ENCODE measurements at regions of chr17 and their contacts with region 1.

Region 1: GRCh38 chr17:45135192-45135977 is at the start of gene ACBD4:
- DNase-seq: peak; percentile 99 to 100
- ATAC-seq: peak; percentile 59 to 78
- H3K4me3 ChIP-seq: peak within 1 kb of the TSS; percentile 55
- H3K27ac ChIP-seq: peak within 1 kb of the TSS; percentile 82 to 93
- H3K4me1 ChIP-seq: peaks cover 33% of the 10 kb centered on the region
- CTCF ChIP-seq: peak; percentile 100
- EP300 ChIP-seq: no peak
- POLR2A ChIP-seq: peak; percentile 77
- RAD21 ChIP-seq: peak; percentile 99 to 100
- polyA plus RNA-seq, gene ACBD4: 11.2 and 11.4 TPM in 2 replicates

Region 2: GRCh38 chr17:44919885-44920564 is 215.4 kb before region 1 on chr17:
- CTCF ChIA-PET with region 1: interaction called, 47 read pairs
- POLR2A ChIA-PET with region 1: no interaction called
- DNase-seq: peak; percentile 89 to 97
- ATAC-seq: peak; percentile 85 to 90
- H3K4me3 ChIP-seq: no peak overlapping the region
- H3K27ac ChIP-seq: peak overlapping the region; percentile 14 to 80; a peak in 4 of 6 replicates
- H3K4me1 ChIP-seq: peaks cover 23% of the 10 kb centered on the region
- CTCF ChIP-seq: peak; percentile 98
- EP300 ChIP-seq: no peak
- POLR2A ChIP-seq: no peak
- RAD21 ChIP-seq: peak; percentile 99

Region 3: DNA sequence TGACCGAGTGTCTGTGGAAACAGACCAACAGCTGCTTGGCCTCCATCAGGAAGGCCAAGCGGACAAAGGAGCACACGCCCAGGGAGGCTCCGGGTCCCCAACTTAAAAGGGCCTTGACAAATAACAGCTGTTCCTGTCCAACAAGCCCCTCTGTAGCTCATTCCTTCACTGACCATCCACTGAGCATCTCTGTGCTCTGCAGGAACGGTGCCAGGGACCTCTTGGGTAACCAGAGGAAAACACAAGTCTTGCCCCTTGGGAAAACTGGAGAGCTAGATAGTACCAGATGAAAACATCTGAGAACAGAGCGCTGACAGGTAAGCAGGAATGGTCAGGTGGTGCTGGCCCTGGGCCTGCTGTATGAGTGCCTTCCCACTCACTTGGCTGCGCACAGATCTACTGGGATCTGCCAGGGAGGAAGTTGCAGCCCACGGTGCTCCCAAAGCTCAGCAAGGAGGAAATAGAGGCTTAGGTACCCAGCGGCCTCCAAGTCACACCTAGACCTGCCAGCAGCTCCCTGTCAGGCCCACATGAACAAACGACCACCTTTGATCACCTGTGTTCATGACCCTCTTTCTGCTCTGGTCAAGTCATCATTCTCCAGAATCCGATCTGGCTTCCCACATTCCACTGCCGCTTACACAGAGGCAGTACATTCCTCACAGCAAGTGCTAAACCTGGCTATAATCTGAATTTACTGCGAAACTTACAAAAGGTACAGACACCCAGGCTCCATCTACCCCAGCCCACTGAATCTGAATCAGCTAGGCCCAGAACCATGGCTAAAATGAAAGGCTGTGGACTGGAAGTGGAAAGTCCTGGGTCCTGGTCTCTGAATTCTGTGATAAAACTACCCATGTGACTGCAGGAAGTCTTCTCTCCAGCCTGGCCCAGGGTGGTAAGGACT is 96.4 kb before region 1 on chr17:
- CTCF ChIA-PET with region 1: interaction called, 11 read pairs
- POLR2A ChIA-PET with region 1: no interaction called
- DNase-seq: no peak
- ATAC-seq: no peak
- H3K4me3 ChIP-seq: no peak overlapping the region
- H3K27ac ChIP-seq: 0 out of 6 replicates have a peak overlapping the region, but pooled peaks of 1 of the 2 experiments have one; percentile 0
- H3K4me1 ChIP-seq: peaks cover 12% of the 10 kb centered on the region; the same call in 1 of the 3 replicates
- CTCF ChIP-seq: no peak
- EP300 ChIP-seq: no peak
- POLR2A ChIP-seq: no peak
- RAD21 ChIP-seq: no peak

Region 4: GRCh38 chr17:45098869-45099616 is 36.3 kb before region 1 on chr17:
- CTCF ChIA-PET with region 1: interaction called, 742 read pairs
- POLR2A ChIA-PET with region 1: no interaction called
- DNase-seq: peak; percentile 85 to 99
- ATAC-seq: peak; percentile 87 to 92
- H3K4me3 ChIP-seq: no peak overlapping the region
- H3K27ac ChIP-seq: no peak overlapping the region
- H3K4me1 ChIP-seq: peaks cover 11% of the 10 kb centered on the region
- CTCF ChIP-seq: peak; percentile 98
- EP300 ChIP-seq: no peak
- POLR2A ChIP-seq: no peak
- RAD21 ChIP-seq: peak; percentile 84 to 87

Region 5: GRCh38 chr17:45184144-45184543 is 48.8 kb after region 1 on chr17:
- CTCF ChIA-PET with region 1: interaction called, 37 read pairs
- POLR2A ChIA-PET with region 1: no interaction called
- DNase-seq: no peak
- ATAC-seq: no peak
- H3K4me3 ChIP-seq: no peak overlapping the region
- H3K27ac ChIP-seq: peak overlapping the region; percentile 60 to 79
- H3K4me1 ChIP-seq: peaks cover 23% of the 10 kb centered on the region
- CTCF ChIP-seq: no peak
- EP300 ChIP-seq: no peak
- POLR2A ChIP-seq: no peak
- RAD21 ChIP-seq: no peak

Region 6: DNA sequence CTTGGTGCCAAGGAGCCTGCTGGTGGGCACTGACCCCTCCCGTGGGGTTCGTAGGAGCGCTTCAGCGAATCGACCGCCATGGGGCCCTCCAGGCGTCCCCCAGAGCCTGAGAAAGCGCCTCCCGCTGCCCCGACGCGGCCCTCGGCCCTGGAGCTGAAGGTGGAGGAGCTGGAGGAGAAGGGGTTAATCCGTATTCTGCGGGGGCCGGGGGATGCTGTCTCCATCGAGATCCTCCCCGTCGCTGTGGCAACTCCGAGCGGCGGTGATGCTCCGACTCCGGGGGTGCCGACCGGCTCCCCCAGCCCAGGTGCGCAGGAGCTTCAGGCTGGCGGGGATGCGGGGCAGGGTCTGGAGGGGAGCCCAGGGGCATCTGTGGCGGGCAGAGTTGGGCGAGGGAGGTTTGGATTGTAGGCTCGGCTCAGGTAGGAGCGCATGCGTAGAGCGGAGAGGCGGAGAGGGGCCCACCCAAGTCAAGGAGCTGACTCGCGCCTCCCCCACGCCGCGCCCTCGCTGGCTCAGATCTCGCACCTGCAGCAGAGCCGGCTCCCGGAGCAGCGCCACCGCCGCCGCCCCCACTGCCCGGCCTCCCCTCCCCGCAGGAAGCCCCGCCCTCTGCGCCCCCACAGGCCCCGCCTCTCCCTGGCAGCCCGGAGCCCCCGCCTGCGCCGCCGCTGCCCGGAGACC is 106.1 kb after region 1 on chr17:
- CTCF ChIA-PET with region 1: interaction called, 202 read pairs
- POLR2A ChIA-PET with region 1: no interaction called
- DNase-seq: no peak
- ATAC-seq: no peak
- H3K4me3 ChIP-seq: no peak overlapping the region
- H3K27ac ChIP-seq: no peak overlapping the region; a peak in 1 of 6 replicates
- H3K4me1 ChIP-seq: peaks cover 13% of the 10 kb centered on the region
- CTCF ChIP-seq: no peak
- EP300 ChIP-seq: no peak
- POLR2A ChIP-seq: no peak
- RAD21 ChIP-seq: no peak

Region 7: GRCh38 chr17:45317112-45317928 is 181.9 kb after region 1 on chr17:
- CTCF ChIA-PET with region 1: interaction called, 12 read pairs
- POLR2A ChIA-PET with region 1: no interaction called
- DNase-seq: peak; percentile 100
- ATAC-seq: peak; percentile 79 to 83
- H3K4me3 ChIP-seq: peak overlapping the region; percentile 69
- H3K27ac ChIP-seq: peak overlapping the region; percentile 95
- H3K4me1 ChIP-seq: peaks cover 73% of the 10 kb centered on the region
- CTCF ChIP-seq: no peak
- EP300 ChIP-seq: no peak
- POLR2A ChIP-seq: peak; percentile 68
- RAD21 ChIP-seq: no peak

Region 8: DNA sequence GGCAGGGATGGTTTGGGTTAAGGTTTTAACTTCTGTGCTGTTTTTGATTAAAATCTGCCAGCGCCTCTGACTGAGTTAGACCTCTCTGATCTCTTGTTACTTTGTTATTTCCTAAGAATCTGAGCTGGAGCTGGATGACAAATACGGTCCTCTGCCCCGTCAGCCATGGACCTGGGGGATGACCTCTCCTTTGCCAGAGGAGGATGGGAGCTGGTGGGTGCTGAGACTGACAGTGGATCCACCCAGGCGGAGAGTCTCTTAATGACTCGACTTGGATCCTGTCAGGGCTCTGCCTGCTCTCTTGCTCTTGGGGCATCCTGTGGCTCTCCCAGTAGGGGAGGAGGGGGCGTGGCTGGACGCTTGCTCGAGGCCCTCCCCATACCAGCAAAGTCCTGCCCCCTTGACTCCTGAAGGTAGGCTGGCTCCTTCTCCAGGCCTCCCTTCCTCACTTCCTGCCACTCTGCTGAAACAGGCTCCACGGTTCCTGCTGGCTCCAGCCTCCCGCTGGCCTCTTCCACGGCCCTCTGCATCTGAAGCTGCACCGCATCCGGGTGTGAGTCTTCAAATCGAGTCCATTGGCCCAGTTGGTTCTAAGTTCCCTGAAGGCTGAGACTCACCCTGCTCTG is 206.3 kb after region 1 on chr17:
- CTCF ChIA-PET with region 1: no interaction called
- POLR2A ChIA-PET with region 1: no interaction called
- DNase-seq: peak; percentile 94 to 96
- ATAC-seq: peak; percentile 98 to 99
- H3K4me3 ChIP-seq: peak overlapping the region; percentile 37
- H3K27ac ChIP-seq: peak overlapping the region; percentile 89 to 91
- H3K4me1 ChIP-seq: peaks cover 39% of the 10 kb centered on the region
- CTCF ChIP-seq: no peak
- EP300 ChIP-seq: no peak
- POLR2A ChIP-seq: peak; percentile 91
- RAD21 ChIP-seq: 0 out of 5 replicates have a peak, but pooled peaks of 1 of the 2 experiments have one; percentile 29